MCF 10A (cell line): ENCODE measurements at regions of chr6 and their contacts with region 1.

Region 1: DNA sequence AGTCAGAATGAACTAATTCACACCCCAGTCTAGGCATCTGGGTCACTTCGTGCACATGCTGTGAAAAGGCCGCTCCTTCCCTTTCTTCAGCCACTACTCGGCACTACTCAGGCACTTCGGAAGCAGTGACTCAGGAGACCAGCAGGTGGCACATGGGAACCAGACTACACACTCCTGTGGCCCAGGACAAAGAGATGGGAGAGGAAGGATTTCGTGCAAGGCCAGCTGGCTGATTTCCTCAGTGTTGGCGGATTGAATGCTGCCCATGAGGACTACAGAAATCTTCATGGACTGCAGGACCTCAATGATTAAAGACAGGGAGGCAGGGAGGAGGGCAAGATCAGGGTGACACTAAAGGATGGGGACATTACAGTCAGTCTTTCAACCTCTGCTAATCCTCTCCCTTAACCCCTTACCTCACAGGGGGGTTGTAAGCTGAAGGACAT is 117.8 kb upstream of the SPACA1 start:
- DNase-seq: peak; percentile 87
- H3K4me3 Mint-ChIP-seq: no peak overlapping the region
- H3K27ac Mint-ChIP-seq: peak overlapping the region; percentile 52
- H3K4me1 Mint-ChIP-seq: peaks cover 9% of the 10 kb centered on the region
- H3K27me3 Mint-ChIP-seq: no peaks in the 10 kb centered on the region
- CTCF ChIP-seq: peak; percentile 70

Region 2: DNA sequence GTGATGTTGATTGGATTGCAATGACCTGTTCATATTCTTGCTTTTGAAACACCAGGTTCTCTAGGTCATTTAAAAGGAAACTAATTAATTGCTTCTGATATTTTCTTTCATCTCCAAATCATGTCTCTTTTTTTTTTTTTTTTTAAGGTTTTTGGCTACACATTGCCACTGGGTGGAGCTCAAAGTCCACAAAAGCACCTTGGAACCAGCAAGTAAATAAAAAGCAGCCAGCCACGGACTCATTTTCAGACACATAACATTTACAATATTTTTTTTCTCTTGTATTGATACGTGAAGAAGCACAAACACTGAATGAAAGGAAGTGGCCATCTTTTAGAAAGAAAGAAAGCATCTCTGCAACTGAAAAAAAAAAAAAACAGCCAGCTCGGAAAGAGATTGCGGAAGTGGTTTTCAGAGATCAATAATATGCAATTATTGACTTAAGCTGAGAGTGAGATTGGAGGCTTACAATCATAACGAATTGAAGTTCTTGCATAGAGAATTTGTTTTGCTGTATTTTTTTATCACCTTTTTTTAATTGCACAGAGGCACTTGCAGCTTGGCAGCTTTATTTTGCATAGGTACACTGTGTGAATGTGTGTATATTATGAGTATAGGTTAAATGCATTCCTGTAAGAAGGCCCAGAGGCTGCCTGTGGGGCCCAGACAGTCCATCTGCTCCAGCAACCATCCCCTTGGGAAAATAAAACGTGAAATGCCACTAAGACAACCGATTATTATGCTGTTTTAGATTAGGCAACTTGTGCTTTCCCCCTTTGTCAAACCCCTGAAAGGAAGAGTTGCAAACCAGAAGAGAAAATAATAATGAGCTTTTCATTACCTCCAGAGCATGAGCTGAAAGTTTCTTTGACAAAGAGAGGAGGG is 863.2 kb before region 1 on chr6:
- CTCF ChIA-PET with region 1: interaction called, 6 read pairs
- POLR2A ChIA-PET with region 1: no interaction called
- intact Hi-C with region 1: loop called (anchors 5 kb)
- DNase-seq: peak; percentile 62
- H3K4me3 Mint-ChIP-seq: peak overlapping the region; percentile 60
- H3K27ac Mint-ChIP-seq: no peak overlapping the region
- H3K4me1 Mint-ChIP-seq: peaks cover 10% of the 10 kb centered on the region
- H3K27me3 Mint-ChIP-seq: peaks cover 41% of the 10 kb centered on the region
- CTCF ChIP-seq: peak; percentile 72

Region 3: DNA sequence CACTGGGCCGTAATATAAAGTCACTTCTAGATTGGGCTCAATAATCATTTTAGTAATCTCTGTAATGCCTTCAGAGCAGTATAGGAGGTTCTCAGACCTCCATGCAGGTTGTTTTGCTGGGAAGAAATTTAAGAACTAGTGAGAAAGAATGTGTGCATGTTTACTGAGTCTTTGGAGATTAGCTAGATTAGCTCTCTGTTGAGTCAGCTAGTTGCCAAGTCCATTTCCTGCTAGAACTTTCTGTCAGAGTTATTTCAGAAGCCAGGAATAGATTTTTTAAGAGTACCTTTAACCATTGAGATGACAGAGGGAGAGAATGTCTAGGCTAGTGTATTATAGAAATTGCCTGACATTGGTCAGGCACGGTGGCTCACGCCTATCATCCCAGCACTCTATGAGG is 306.6 kb before region 1 on chr6:
- CTCF ChIA-PET with region 1: no interaction called
- POLR2A ChIA-PET with region 1: no interaction called
- intact Hi-C with region 1: no loop called
- DNase-seq: no peak
- H3K4me3 Mint-ChIP-seq: no peak overlapping the region
- H3K27ac Mint-ChIP-seq: no peak overlapping the region
- H3K4me1 Mint-ChIP-seq: no peaks in the 10 kb centered on the region
- H3K27me3 Mint-ChIP-seq: no peaks in the 10 kb centered on the region
- CTCF ChIP-seq: no peak

Region 4: GRCh38 chr6:87907521-87907920 is 22.3 kb before region 1 on chr6:
- CTCF ChIA-PET with region 1: interaction called, 19 read pairs
- POLR2A ChIA-PET with region 1: no interaction called
- intact Hi-C with region 1: no loop called
- DNase-seq: peak; percentile 73
- H3K4me3 Mint-ChIP-seq: no peak overlapping the region
- H3K27ac Mint-ChIP-seq: no peak overlapping the region
- H3K4me1 Mint-ChIP-seq: peaks cover 6% of the 10 kb centered on the region
- H3K27me3 Mint-ChIP-seq: peaks cover 70% of the 10 kb centered on the region
- CTCF ChIP-seq: no peak

Region 5: DNA sequence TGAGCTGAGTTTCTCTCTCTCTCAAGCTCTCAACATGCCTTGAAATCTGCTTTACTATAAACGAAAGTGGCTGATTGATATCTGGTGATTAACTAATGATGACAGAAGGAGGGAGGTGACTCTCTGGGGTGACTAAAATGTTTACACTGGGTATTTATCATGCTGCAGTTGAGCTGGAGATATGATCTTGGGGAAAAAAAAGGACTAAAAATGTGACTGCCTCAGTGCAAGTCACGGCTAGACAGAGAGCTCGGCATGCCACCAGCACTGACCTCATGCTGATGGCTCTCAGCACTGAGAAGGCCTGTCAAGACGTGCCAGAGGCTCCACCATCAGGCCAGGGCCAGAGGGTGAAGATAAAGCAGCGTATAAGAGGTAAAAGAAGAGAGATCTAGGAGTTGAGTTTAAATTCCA is 14.7 kb after region 1 on chr6:
- CTCF ChIA-PET with region 1: interaction called, 83 read pairs
- POLR2A ChIA-PET with region 1: interaction called, 3 read pairs
- intact Hi-C with region 1: no loop called
- DNase-seq: peak; percentile 68
- H3K4me3 Mint-ChIP-seq: no peak overlapping the region
- H3K27ac Mint-ChIP-seq: peak overlapping the region; percentile 43
- H3K4me1 Mint-ChIP-seq: peaks cover 23% of the 10 kb centered on the region
- H3K27me3 Mint-ChIP-seq: peaks cover 11% of the 10 kb centered on the region
- CTCF ChIP-seq: peak; percentile 22

Region 6: DNA sequence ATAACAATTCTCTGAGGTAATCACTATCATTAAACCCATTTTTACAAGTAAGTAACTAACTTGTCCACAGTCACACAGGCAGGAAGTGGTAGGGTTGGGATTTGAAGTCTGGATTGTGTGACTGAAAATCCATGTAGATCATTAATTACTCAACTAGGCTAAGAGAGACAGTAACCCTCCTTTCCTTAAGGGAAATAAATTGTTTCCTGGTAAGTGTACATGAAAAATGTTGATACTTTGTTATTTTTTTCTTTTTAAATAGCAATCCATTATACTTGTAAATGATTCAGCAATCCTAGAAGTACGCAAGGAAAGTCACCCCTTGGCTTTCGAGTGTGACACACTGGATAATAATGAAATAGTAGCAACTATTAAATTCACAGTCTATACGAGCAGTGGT is 129.3 kb after region 1 on chr6:
- CTCF ChIA-PET with region 1: no interaction called
- POLR2A ChIA-PET with region 1: no interaction called
- intact Hi-C with region 1: no loop called
- DNase-seq: no peak
- H3K4me3 Mint-ChIP-seq: no peak overlapping the region
- H3K27ac Mint-ChIP-seq: no peak overlapping the region
- H3K4me1 Mint-ChIP-seq: no peaks in the 10 kb centered on the region
- H3K27me3 Mint-ChIP-seq: peaks cover 35% of the 10 kb centered on the region
- CTCF ChIP-seq: no peak

Region 7: DNA sequence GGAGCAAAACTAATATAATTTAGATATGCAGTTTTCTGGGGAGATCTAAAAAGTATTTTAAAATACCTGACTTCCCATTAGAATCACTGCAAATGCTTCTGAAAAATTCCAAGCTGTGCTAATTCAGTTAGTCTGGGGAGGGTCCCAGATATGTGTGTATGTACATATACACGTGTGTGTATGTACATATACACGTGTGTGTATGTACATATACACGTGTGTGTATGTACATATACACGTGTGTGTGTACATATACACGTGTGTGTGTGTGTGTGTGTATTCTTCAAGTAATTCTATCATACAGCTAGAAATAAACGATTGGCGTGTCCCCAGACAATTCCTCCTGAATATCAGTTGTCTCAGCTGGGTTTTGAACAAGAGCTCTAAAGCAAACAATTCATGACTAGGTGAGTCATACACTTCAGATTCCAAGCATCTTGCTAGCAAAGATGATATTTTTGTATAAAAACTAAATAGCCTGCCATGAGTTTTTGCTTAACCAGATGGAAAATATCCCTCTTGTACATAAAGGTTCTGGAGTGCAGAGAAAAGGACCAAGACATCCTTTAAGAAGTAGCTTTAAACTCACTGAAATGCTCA is 176.0 kb after region 1 on chr6:
- CTCF ChIA-PET with region 1: no interaction called
- POLR2A ChIA-PET with region 1: no interaction called
- intact Hi-C with region 1: no loop called
- DNase-seq: no peak
- H3K4me3 Mint-ChIP-seq: no peak overlapping the region
- H3K27ac Mint-ChIP-seq: no peak overlapping the region
- H3K4me1 Mint-ChIP-seq: no peaks in the 10 kb centered on the region
- H3K27me3 Mint-ChIP-seq: peaks cover 1% of the 10 kb centered on the region
- CTCF ChIP-seq: no peak

Region 8: GRCh38 chr6:88477413-88477812 is 547.5 kb after region 1 on chr6:
- CTCF ChIA-PET with region 1: no interaction called
- POLR2A ChIA-PET with region 1: no interaction called
- intact Hi-C with region 1: loop called (anchors 1 kb)
- DNase-seq: peak; percentile 37
- H3K4me3 Mint-ChIP-seq: no peak overlapping the region
- H3K27ac Mint-ChIP-seq: no peak overlapping the region
- H3K4me1 Mint-ChIP-seq: no peaks in the 10 kb centered on the region
- H3K27me3 Mint-ChIP-seq: no peaks in the 10 kb centered on the region
- CTCF ChIP-seq: peak; percentile 22

Region 9: DNA sequence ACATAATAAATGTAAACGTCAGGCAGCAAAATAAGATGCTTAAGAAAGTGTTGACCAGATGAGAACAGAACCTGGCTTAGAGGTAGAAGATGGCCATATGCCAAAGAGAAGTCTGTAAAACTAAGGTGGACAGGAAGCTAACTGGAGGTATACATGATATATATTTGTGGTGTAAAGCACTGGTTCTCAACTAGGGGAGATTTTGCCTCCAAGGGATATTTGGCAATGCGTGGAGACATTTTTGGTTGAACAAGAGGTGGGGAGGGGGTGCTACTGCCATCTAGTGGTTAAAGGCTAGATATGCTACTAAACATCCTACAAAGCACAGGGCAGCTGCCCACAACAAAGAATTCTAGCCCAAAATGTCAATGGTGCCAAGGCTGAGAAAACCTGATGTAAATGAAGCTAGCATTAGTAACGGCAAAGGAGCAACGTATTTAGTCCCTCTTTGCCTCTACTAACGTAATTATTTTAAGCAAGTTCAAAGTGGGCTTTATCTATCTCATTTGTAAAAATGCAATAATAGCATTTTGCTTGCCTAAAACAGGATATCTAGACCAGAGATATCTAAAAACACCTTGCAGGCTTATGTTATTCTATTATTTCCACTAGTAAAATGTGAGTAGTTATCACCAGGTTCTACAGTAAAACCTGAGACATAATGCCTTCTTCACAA is 851.0 kb after region 1 on chr6:
- CTCF ChIA-PET with region 1: interaction called, 17 read pairs
- POLR2A ChIA-PET with region 1: no interaction called
- intact Hi-C with region 1: loop called (anchors 1 kb)
- DNase-seq: peak; percentile 91
- H3K4me3 Mint-ChIP-seq: no peak overlapping the region
- H3K27ac Mint-ChIP-seq: no peak overlapping the region
- H3K4me1 Mint-ChIP-seq: peaks cover 5% of the 10 kb centered on the region
- H3K27me3 Mint-ChIP-seq: no peaks in the 10 kb centered on the region
- CTCF ChIP-seq: peak; percentile 70

Region 10: DNA sequence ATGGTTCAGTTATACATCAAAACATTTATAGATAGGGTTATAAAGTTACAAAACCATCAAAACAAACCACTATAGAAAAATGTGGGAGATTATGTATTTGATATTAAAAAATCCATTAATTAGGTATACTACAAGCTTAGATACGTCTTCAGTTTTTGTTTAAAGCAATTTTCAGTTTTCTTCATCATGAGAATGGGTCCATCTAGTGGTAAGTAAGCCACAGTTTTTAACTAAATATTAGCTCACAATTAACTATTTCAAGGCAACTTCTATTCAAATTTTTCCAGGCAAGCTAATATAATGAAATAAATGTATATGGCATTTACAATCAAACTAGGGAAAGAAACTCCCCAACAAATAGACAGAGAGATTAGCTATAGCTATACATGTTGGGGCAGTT is 989.2 kb after region 1 on chr6:
- CTCF ChIA-PET with region 1: no interaction called
- POLR2A ChIA-PET with region 1: no interaction called
- intact Hi-C with region 1: loop called (anchors 1 kb)
- DNase-seq: peak; percentile 4
- H3K4me3 Mint-ChIP-seq: no peak overlapping the region
- H3K27ac Mint-ChIP-seq: no peak overlapping the region
- H3K4me1 Mint-ChIP-seq: no peaks in the 10 kb centered on the region
- H3K27me3 Mint-ChIP-seq: no peaks in the 10 kb centered on the region
- CTCF ChIP-seq: peak; percentile 11